ENCODE measurements at regions of chr6 and their contacts with region 1.

Region 1: DNA sequence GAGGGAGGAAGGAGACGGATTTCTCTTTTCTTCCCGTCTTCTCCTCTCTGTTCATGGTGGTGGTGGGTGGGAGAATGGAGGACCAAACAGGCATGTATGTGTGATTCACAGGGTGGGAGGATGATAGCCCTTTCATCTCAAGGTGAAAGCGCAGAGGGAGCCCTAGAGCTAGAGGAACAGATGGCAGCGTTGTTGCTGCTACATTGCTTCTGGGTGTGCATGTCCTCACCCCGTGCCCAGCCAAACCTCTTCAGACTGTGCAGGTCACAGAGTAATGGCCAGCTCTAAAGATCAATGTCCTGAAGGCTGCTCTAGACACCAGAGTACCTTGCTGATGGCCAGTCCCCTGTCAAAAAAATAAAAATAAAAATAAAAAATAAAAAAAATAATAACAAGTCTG is 301.8 kb downstream of the TBC1D7 start:
- DNase-seq: no peak
- ATAC-seq: peak; percentile 46 to 85 (median 80)
- H3K4me3 ChIP-seq: no peak overlapping the region
- H3K27ac ChIP-seq: peak overlapping the region in 5 of 10 donors; percentile 18 to 46 (median 35)
- H3K4me1 ChIP-seq: peaks cover 0 to 51% (median 21%) of the 10 kb centered on the region in 9 donors
- H3K27me3 ChIP-seq: no peaks in the 10 kb centered on the region
- CTCF ChIP-seq: peak in 1 of 9 donors; percentile 16

Region 2: DNA sequence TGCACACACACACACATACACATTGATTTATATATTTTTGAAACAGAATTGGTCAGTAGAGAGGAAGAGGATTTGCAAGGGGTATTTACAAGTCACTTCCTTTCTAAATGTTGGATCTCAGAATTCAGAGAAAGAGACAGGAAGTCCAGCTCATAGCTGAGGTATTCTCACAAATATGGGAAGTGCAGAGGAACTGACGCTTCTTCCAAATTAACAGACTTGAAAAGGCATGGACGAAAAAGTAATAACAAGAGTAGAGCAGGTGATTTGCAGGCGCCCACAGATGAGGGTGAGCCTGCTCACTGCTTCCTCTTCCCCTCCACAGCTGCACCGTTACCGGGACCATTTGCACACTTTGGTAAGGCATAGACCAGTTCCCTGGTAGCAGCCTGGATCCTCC is 63.6 kb before region 1 on chr6:
- intact Hi-C with region 1: loop called in 1 of 10 experiments (anchors 5 kb)
- DNase-seq: no peak
- ATAC-seq: peak in 7 of 8 donors; percentile 26 to 65 (median 43)
- H3K4me3 ChIP-seq: peak overlapping the region in 9 of 10 donors; percentile 4 to 30 (median 23)
- H3K27ac ChIP-seq: peak overlapping the region; percentile 38 to 91 (median 78)
- H3K4me1 ChIP-seq: peaks cover 0 to 53% (median 37%) of the 10 kb centered on the region in 9 donors
- H3K27me3 ChIP-seq: no peaks in the 10 kb centered on the region
- CTCF ChIP-seq: no peak

Region 3: GRCh38 chr6:13113981-13114593 is 87.5 kb after region 1 on chr6:
- intact Hi-C with region 1: loop called in 1 of 10 experiments (anchors 5 kb)
- DNase-seq: peak in 1 of 2 donors; percentile 9
- ATAC-seq: peak in 6 of 8 donors; percentile 42 to 77 (median 62)
- H3K4me3 ChIP-seq: peak overlapping the region in 1 of 10 donors; percentile 2
- H3K27ac ChIP-seq: no peak overlapping the region
- H3K4me1 ChIP-seq: peaks cover 0 to 32% (median 22%) of the 10 kb centered on the region in 9 donors
- H3K27me3 ChIP-seq: no peaks in the 10 kb centered on the region
- CTCF ChIP-seq: no peak

Region 4: GRCh38 chr6:13120483-13121482 is 94.2 kb after region 1 on chr6:
- intact Hi-C with region 1: loop called in 2 of 10 experiments (anchors 5 kb)
- DNase-seq: peak; percentile 36 to 64
- ATAC-seq: peak; percentile 78 to 96 (median 91)
- H3K4me3 ChIP-seq: no peak overlapping the region
- H3K27ac ChIP-seq: peak overlapping the region in 7 of 10 donors; percentile 18 to 61 (median 37)
- H3K4me1 ChIP-seq: peaks cover 0 to 32% (median 12%) of the 10 kb centered on the region in 9 donors
- H3K27me3 ChIP-seq: no peaks in the 10 kb centered on the region
- CTCF ChIP-seq: peak in 6 of 9 donors; percentile 7 to 54 (median 35)

Region 5: GRCh38 chr6:13248053-13248452 is 221.5 kb after region 1 on chr6:
- intact Hi-C with region 1: no loop called
- DNase-seq: no peak
- ATAC-seq: no peak
- H3K4me3 ChIP-seq: no peak overlapping the region
- H3K27ac ChIP-seq: no peak overlapping the region
- H3K4me1 ChIP-seq: peaks cover 0 to 3% (median 0%) of the 10 kb centered on the region in 9 donors
- H3K27me3 ChIP-seq: no peaks in the 10 kb centered on the region
- CTCF ChIP-seq: no peak

Region 6: GRCh38 chr6:13487122-13488014 is 460.8 kb after region 1 on chr6 and contains the start of gene GFOD1:
- intact Hi-C with region 1: no loop called
- DNase-seq: peak; percentile 90 to 92
- ATAC-seq: peak; percentile 83 to 94 (median 86)
- H3K4me3 ChIP-seq: peak within 1 kb of the TSS; percentile 69 to 98 (median 90)
- H3K27ac ChIP-seq: peak within 1 kb of the TSS; percentile 91 to 98 (median 94)
- H3K4me1 ChIP-seq: peaks cover 3 to 46% (median 39%) of the 10 kb centered on the region in 9 donors
- H3K27me3 ChIP-seq: no peaks in the 10 kb centered on the region
- CTCF ChIP-seq: peak in 4 of 9 donors; percentile 20 to 40 (median 32)
- total RNA-seq, gene GFOD1: 26.5 to 96.5 (median 41.0) TPM

Measured in heart right ventricle (tissue), 16 donors.